H1 (cell line): ENCODE measurements at regions of chr1 and their contacts with region 1.

Region 1: GRCh38 chr1:45018599-45019230 is 6.7 kb downstream of the UROD start:
- DNase-seq: peak in 1 of 2 experiments; percentile 79
- H3K4me3 ChIP-seq: no peak overlapping the region
- H3K27ac ChIP-seq: no peak overlapping the region
- H3K4me1 ChIP-seq: no peaks in the 10 kb centered on the region
- H3K27me3 ChIP-seq: no peaks in the 10 kb centered on the region
- CTCF ChIP-seq: peak; percentile 87 to 97 (median 96)
- EP300 ChIP-seq: no peak
- POLR2A ChIP-seq: no peak
- RAD21 ChIP-seq: peak; percentile 84 to 86

Region 2: DNA sequence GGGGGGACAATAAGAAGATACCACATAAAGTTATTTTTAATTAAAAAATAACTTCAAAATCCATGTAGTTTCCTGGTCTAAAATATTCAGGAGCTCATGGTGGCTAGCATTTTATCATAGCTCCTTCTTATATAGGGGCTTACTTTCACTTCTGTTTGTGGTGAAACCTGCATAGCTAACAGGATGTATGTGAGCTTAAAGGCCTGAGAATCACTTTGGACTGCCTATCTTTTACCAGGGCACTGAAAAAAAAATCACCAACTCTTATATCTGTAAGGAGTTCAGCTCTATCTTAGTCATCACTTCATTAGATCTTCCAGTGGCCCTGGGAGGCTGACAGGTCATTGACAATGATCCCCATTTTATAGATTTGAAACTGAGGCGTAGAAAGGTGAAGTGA is 14.6 kb after region 1 on chr1:
- CTCF ChIA-PET with region 1: interaction called, 36 read pairs
- POLR2A ChIA-PET with region 1: no interaction called
- DNase-seq: no peak
- H3K4me3 ChIP-seq: no peak overlapping the region
- H3K27ac ChIP-seq: no peak overlapping the region
- H3K4me1 ChIP-seq: no peaks in the 10 kb centered on the region
- H3K27me3 ChIP-seq: no peaks in the 10 kb centered on the region
- CTCF ChIP-seq: no peak
- EP300 ChIP-seq: no peak
- POLR2A ChIP-seq: no peak
- RAD21 ChIP-seq: no peak

Region 3: GRCh38 chr1:45230540-45230939 is 211.8 kb after region 1 on chr1:
- CTCF ChIA-PET with region 1: interaction called, 15 read pairs
- POLR2A ChIA-PET with region 1: no interaction called
- DNase-seq: no peak
- H3K4me3 ChIP-seq: no peak overlapping the region
- H3K27ac ChIP-seq: no peak overlapping the region
- H3K4me1 ChIP-seq: no peaks in the 10 kb centered on the region
- H3K27me3 ChIP-seq: no peaks in the 10 kb centered on the region
- CTCF ChIP-seq: peak; percentile 34 to 45 (median 41)
- EP300 ChIP-seq: no peak
- POLR2A ChIP-seq: no peak
- RAD21 ChIP-seq: peak; percentile 75 to 78

Region 4: DNA sequence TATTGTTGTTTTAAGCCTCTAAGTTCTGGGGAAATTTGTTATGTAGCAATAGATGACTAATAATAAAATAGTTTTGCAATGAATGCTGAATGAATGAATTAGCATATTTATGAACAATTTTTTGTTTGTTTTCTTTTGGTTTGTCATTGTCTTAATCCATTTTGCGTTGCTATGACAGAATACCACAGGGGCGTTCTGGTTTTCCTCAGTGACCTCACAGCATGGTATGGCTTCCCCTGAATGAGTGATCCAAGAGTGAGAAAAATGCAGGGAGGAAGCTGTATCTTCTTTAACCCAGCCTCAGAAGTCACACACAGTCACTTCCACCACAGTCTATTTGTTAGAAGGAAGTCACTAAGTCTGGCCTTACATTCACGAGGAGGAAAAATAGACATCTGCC is 254.3 kb after region 1 on chr1:
- CTCF ChIA-PET with region 1: interaction called, 10 read pairs
- POLR2A ChIA-PET with region 1: no interaction called
- DNase-seq: no peak
- H3K4me3 ChIP-seq: no peak overlapping the region
- H3K27ac ChIP-seq: no peak overlapping the region
- H3K4me1 ChIP-seq: peaks cover 0 to 4% (median 4%) of the 10 kb centered on the region in 4 experiments; a peak in 2 of 7 replicates
- H3K27me3 ChIP-seq: no peaks in the 10 kb centered on the region
- CTCF ChIP-seq: no peak
- EP300 ChIP-seq: no peak
- POLR2A ChIP-seq: no peak
- RAD21 ChIP-seq: no peak

Region 5: GRCh38 chr1:45385302-45385701 is 366.6 kb after region 1 on chr1:
- CTCF ChIA-PET with region 1: no interaction called
- POLR2A ChIA-PET with region 1: no interaction called
- DNase-seq: no peak
- H3K4me3 ChIP-seq: no peak overlapping the region
- H3K27ac ChIP-seq: no peak overlapping the region
- H3K4me1 ChIP-seq: no peaks in the 10 kb centered on the region
- H3K27me3 ChIP-seq: no peaks in the 10 kb centered on the region
- CTCF ChIP-seq: no peak
- EP300 ChIP-seq: no peak
- POLR2A ChIP-seq: no peak
- RAD21 ChIP-seq: no peak